WTC11 (cell line): ENCODE measurements at regions of chr20 and their contacts with region 1.

Region 1: GRCh38 chr20:43389892-43390626 is 67.6 kb upstream of the SRSF6 start:
- DNase-seq: peak; percentile 79
- ATAC-seq: peak; percentile 82
- H3K4me3 Mint-ChIP-seq: no peak overlapping the region
- H3K27ac Mint-ChIP-seq: no peak overlapping the region
- H3K4me1 Mint-ChIP-seq: peaks cover 3% of the 10 kb centered on the region; the same call in 1 of the 2 replicates
- H3K27me3 Mint-ChIP-seq: no peaks in the 10 kb centered on the region; the same call in 1 of the 2 replicates
- CTCF ChIP-seq: peak; percentile 95

Region 2: GRCh38 chr20:43379578-43379917 is 10.5 kb before region 1 on chr20:
- CTCF ChIA-PET with region 1: interaction called, 12 read pairs
- POLR2A ChIA-PET with region 1: no interaction called
- DNase-seq: no peak
- ATAC-seq: no peak
- H3K4me3 Mint-ChIP-seq: no peak overlapping the region
- H3K27ac Mint-ChIP-seq: no peak overlapping the region
- H3K4me1 Mint-ChIP-seq: peaks cover 4% of the 10 kb centered on the region; the same call in 1 of the 2 replicates
- H3K27me3 Mint-ChIP-seq: no peaks in the 10 kb centered on the region
- CTCF ChIP-seq: no peak

Region 3: GRCh38 chr20:43408848-43409576 is 19.0 kb after region 1 on chr20:
- CTCF ChIA-PET with region 1: interaction called, 10 read pairs
- POLR2A ChIA-PET with region 1: no interaction called
- DNase-seq: peak; percentile 61
- ATAC-seq: peak; percentile 88
- H3K4me3 Mint-ChIP-seq: no peak overlapping the region
- H3K27ac Mint-ChIP-seq: no peak overlapping the region
- H3K4me1 Mint-ChIP-seq: no peaks in the 10 kb centered on the region
- H3K27me3 Mint-ChIP-seq: peaks cover 20% of the 10 kb centered on the region
- CTCF ChIP-seq: peak; percentile 60